MCF 10A (cell line): ENCODE measurements at regions of chr11 and their contacts with region 1.

Region 1: GRCh38 chr11:8813658-8814057 is 97.3 kb upstream of the AKIP1 start:
- DNase-seq: peak; percentile 91
- H3K4me3 Mint-ChIP-seq: no peak overlapping the region
- H3K27ac Mint-ChIP-seq: no peak overlapping the region
- H3K4me1 Mint-ChIP-seq: peaks cover 10% of the 10 kb centered on the region
- H3K27me3 Mint-ChIP-seq: no peaks in the 10 kb centered on the region
- CTCF ChIP-seq: peak; percentile 67

Region 2: DNA sequence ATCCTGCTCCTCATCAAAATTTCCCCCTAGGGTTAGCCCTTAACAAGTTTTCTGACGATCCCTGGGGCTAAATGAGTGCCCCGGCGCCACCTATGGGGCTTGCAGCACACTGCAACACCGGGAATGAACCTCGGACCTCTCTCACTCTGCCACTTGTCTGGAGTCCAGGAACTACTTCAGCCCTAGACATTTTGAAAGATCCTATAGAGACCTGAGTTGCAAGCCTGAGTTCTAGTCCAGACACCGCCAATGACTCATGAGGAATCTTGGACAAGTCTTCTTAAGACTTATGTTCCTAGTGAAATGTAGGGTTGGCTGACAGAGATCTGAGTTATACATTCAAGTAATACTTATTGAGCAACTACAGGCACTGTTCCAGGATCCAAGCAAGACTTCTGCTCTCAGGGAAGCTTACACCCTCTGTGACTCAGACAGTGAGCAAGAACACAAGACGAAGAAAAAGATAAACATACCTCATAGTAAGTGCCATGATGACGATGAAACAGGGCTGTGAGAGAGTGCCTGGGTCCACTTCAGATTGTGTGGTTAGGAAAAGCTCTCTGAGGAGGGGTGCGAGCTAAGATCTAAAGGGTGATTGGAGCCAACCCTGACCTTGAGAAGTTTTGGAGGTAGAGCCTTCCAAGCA is 209.5 kb before region 1 on chr11:
- CTCF ChIA-PET with region 1: interaction called, 3 read pairs
- POLR2A ChIA-PET with region 1: no interaction called
- intact Hi-C with region 1: loop called (anchors 1 kb)
- DNase-seq: peak; percentile 100
- H3K4me3 Mint-ChIP-seq: peak overlapping the region; percentile 15
- H3K27ac Mint-ChIP-seq: peak overlapping the region; percentile 95
- H3K4me1 Mint-ChIP-seq: peaks cover 25% of the 10 kb centered on the region
- H3K27me3 Mint-ChIP-seq: no peaks in the 10 kb centered on the region
- CTCF ChIP-seq: peak; percentile 64

Region 3: DNA sequence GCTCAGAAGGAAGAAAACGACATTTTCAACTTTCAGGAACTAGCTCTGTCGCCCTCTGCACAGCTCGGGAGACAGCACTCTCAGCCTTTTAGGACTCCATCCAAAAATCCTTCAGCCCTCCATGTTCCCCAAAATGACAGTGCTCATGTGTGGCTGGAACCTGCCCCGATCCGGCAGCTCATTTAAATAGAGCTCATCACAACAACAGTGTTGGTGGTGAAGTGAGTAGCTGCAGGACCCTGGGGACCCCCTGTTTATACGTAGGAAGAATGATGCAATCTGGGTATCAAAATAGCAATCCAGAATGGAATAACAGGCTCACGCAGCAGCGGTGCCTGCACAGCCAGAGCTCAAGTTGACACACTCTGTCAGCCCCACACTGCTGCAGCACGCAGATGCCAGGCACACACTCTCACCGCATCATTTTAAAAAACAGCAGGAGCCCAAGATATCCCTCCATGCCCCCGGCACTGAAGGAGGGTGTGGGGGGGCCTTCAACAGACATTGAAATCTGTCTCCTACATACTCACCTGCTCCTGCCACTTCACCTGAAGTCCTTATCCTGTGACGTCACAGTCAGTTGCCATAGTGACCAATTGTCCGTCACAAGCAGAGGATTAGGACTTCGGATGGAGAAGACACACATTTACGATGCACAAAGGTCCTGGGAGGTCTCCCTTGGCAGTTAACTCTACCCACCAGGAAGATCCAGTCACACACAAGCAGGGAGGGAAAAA is 155.2 kb before region 1 on chr11:
- CTCF ChIA-PET with region 1: no interaction called
- POLR2A ChIA-PET with region 1: no interaction called
- intact Hi-C with region 1: no loop called
- DNase-seq: no peak
- H3K4me3 Mint-ChIP-seq: no peak overlapping the region
- H3K27ac Mint-ChIP-seq: no peak overlapping the region
- H3K4me1 Mint-ChIP-seq: no peaks in the 10 kb centered on the region
- H3K27me3 Mint-ChIP-seq: no peaks in the 10 kb centered on the region
- CTCF ChIP-seq: no peak

Region 4: DNA sequence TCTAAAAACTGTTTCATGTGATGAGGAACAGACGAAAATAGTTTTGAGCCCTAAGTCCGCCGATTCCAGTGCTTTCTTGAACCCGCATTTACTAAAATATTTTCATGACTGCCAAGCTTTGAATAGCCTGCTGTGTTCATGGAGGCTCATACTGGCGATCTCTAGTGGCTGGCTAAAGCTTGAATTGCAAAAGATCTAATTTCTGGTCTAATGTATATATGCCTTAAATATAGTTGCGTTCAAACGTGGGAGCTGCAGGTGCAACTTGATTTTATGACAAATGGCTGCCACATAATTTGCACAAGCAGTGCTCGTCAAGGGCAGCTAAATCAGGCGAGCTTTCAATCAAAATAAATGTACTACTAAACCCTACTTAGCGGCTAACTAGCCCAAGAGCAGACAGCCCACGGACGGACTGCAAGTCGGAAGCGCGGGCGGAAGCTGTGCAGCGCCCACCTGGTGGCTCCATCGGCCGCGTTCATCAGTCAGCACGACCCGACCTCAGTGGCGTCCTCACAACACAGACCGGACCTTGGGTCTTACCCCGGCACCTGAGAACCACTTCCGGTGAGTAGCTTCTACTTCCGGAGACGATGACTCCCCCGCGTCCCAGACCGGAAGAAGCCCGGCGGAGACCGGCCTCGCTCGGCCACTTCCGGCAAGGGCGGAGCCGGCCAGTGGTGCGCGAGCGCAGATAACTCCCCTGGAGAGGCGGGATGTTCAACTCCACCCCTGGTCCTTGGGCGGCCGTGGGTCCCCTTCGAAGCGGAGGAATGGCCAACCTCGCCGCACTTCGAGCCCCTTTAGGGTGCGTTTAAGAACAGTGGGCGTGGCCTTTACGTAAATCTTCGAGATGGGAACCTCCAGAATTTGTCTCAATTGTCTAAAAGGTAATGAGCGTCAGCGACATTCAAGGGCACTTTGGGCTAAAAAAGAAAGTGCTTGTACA is 125.0 kb before region 1 on chr11:
- CTCF ChIA-PET with region 1: interaction called, 7 read pairs
- POLR2A ChIA-PET with region 1: interaction called, 66 read pairs
- intact Hi-C with region 1: loop called (anchors 1 kb)
- DNase-seq: peak; percentile 97
- H3K4me3 Mint-ChIP-seq: peak overlapping the region; percentile 75
- H3K27ac Mint-ChIP-seq: peak overlapping the region; percentile 87
- H3K4me1 Mint-ChIP-seq: peaks cover 33% of the 10 kb centered on the region
- H3K27me3 Mint-ChIP-seq: no peaks in the 10 kb centered on the region
- CTCF ChIP-seq: no peak

Region 5: GRCh38 chr11:8768625-8769333 is 44.9 kb before region 1 on chr11:
- CTCF ChIA-PET with region 1: interaction called, 10 read pairs
- POLR2A ChIA-PET with region 1: interaction called, 9 read pairs
- intact Hi-C with region 1: no loop called
- DNase-seq: peak; percentile 80
- H3K4me3 Mint-ChIP-seq: no peak overlapping the region
- H3K27ac Mint-ChIP-seq: peak overlapping the region; percentile 81
- H3K4me1 Mint-ChIP-seq: peaks cover 59% of the 10 kb centered on the region
- H3K27me3 Mint-ChIP-seq: no peaks in the 10 kb centered on the region
- CTCF ChIP-seq: no peak

Region 6: DNA sequence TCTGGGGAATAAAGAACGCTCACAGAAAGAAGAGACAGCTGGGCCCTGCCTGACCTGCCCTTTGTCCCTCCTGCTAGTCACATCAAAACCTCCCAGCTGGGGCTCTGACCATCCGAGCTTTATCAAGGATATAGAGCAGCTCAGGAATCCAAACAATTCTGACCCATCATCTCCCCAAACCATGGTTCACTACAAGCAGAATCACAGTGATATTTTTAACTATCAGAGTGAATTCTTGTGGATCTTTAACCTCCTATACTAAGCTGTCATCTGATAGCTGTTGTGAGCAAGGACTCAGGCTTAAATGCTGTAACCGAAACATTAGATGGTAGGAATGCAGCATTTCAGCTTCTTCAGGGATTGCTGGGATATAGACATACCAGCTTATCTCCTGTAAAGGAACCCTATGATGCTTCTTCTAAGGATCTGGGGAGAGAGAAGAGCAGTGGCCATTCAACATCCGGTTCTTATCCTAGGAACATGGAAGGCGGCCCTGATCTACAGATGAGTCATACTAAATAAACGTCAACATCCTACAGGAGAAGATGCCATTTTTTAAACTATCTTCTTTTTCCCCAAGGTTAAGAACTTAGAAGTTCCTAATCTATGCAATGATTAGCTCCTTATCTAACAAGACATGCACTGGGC is 12.6 kb after region 1 on chr11:
- CTCF ChIA-PET with region 1: interaction called, 11 read pairs
- POLR2A ChIA-PET with region 1: interaction called, 7 read pairs
- intact Hi-C with region 1: no loop called
- DNase-seq: peak; percentile 34
- H3K4me3 Mint-ChIP-seq: no peak overlapping the region
- H3K27ac Mint-ChIP-seq: no peak overlapping the region
- H3K4me1 Mint-ChIP-seq: no peaks in the 10 kb centered on the region
- H3K27me3 Mint-ChIP-seq: no peaks in the 10 kb centered on the region
- CTCF ChIP-seq: no peak

Region 7: GRCh38 chr11:8870411-8871170 is 56.9 kb after region 1 on chr11:
- CTCF ChIA-PET with region 1: interaction called, 16 read pairs
- POLR2A ChIA-PET with region 1: interaction called, 64 read pairs
- intact Hi-C with region 1: loop called (anchors 1 kb)
- DNase-seq: peak; percentile 59
- H3K4me3 Mint-ChIP-seq: peak overlapping the region; percentile 78
- H3K27ac Mint-ChIP-seq: no peak overlapping the region
- H3K4me1 Mint-ChIP-seq: peaks cover 10% of the 10 kb centered on the region
- H3K27me3 Mint-ChIP-seq: no peaks in the 10 kb centered on the region
- CTCF ChIP-seq: no peak